Prostate gland (tissue), 2 donors: ENCODE measurements at regions of chr21 and their contacts with region 1.

Region 1: GRCh38 chr21:15064576-15065391 is at the start of gene NRIP1:
- DNase-seq: peak; percentile 89
- H3K4me3 ChIP-seq: peak within 1 kb of the TSS; percentile 88 to 97
- H3K27ac ChIP-seq: peak within 1 kb of the TSS; percentile 96
- H3K4me1 ChIP-seq: no peaks in the 10 kb centered on the region
- H3K27me3 ChIP-seq: no peaks in the 10 kb centered on the region
- CTCF ChIP-seq: no peak
- POLR2A ChIP-seq: peak; percentile 78
- total RNA-seq, gene NRIP1: 29.3 to 43.1 TPM

Region 2: DNA sequence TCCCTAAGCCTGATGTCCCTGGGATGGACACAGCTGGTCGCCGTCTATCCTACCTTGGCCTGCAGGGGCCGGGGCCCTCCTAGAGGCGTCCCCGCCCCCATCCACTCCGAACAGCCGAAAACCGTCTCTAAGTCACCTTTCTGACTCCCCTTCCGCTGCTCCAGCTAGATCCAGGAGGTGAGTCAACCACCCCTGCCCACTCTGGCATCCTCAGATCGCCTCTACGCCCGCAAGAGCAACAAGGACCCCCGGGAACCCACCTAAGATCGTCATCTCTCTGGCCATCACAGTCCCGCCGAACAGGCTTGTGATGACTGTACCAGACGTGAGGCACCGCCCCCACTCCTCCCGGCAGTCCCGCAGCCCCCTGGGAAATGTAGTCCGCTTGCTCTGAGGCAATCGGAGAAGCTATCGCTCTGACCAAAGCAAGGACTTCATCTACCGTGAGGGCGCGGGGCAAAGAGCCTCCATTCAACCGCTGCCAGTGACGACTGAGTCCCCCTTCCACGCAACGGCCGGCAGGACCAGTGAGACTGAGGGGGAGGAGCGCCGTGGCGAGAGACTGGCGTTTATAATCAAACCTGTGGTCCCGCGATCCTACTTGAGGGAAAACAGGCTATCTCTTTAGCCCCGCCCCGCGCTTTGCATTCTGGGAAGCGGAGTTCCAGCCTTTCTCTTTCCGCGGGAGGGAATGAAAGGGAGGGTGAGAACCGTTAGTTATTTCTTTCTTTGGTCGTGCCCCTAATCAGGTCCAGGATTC is 681.8 kb before region 1 on chr21 and contains the start of gene HSPA13:
- intact Hi-C with region 1: loop called (anchors 10 kb)
- DNase-seq: peak; percentile 100
- H3K4me3 ChIP-seq: peak within 1 kb of the TSS; percentile 62 to 74
- H3K27ac ChIP-seq: peak within 1 kb of the TSS; percentile 83 to 85
- H3K4me1 ChIP-seq: no peaks in the 10 kb centered on the region
- H3K27me3 ChIP-seq: no peaks in the 10 kb centered on the region
- CTCF ChIP-seq: peak in 1 of 4 experiments; percentile 21
- POLR2A ChIP-seq: peak; percentile 76
- total RNA-seq, gene HSPA13: 15.3 to 22.5 TPM

Region 3: GRCh38 chr21:14864211-14865021 is 200.4 kb before region 1 on chr21:
- intact Hi-C with region 1: loop called (anchors 10 kb)
- DNase-seq: peak; percentile 57
- H3K4me3 ChIP-seq: no peak overlapping the region
- H3K27ac ChIP-seq: peak overlapping the region in 1 of 2 donors; percentile 33
- H3K4me1 ChIP-seq: no peaks in the 10 kb centered on the region
- H3K27me3 ChIP-seq: no peaks in the 10 kb centered on the region
- CTCF ChIP-seq: peak in 3 of 4 experiments; percentile 30 to 58 (median 53)
- POLR2A ChIP-seq: no peak

Region 4: DNA sequence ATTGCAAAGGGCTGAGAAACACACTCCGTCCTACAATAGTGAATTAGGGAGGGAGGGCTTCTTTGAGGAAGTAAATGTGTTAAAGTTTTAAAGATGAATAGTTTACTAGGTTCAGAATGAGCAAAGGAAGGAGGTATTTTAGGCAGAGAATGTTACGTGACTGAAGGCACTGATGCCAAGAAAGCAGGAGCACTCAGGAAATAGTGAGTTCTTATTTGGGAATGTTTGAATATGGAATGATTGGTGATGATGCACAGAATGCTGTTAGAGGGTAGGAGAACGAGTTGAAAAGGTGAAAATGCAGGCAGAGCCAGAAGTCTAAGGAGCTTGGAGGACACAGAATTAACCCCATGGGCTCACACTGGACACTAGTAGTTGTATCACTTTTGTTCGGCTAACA is 108.0 kb before region 1 on chr21:
- intact Hi-C with region 1: loop called (anchors 10 kb)
- DNase-seq: no peak
- H3K4me3 ChIP-seq: no peak overlapping the region
- H3K27ac ChIP-seq: no peak overlapping the region
- H3K4me1 ChIP-seq: no peaks in the 10 kb centered on the region
- H3K27me3 ChIP-seq: no peaks in the 10 kb centered on the region
- CTCF ChIP-seq: no peak
- POLR2A ChIP-seq: no peak

Region 5: DNA sequence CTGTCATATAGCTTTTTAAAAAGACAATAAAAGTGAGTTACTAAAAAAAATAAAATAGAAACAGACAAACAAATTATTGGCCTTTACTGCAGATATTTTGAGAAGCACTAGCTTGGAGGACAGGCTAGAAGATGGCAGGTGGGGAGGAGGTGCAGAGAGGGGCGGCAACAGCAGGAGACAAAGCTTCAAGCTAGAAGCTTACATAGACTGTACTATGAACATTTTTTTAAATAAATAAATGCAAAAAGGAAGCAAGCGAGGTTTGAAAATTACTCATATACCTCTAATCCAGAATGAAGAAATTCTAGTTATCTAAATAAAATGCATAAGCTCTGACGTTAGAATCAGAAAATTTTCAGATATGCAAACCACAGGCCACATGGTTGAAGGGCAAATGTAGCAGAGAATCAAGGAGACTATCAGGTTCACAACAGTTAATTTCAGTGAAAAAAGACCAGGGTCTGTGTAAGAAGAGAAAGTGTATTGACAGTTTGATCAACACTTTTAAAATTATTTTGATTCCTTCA is 54.9 kb before region 1 on chr21:
- intact Hi-C with region 1: loop called (anchors 2 kb)
- DNase-seq: no peak
- H3K4me3 ChIP-seq: no peak overlapping the region
- H3K27ac ChIP-seq: no peak overlapping the region
- H3K4me1 ChIP-seq: peaks cover 4% of the 10 kb centered on the region
- H3K27me3 ChIP-seq: no peaks in the 10 kb centered on the region
- CTCF ChIP-seq: no peak
- POLR2A ChIP-seq: no peak